ENCODE measurements at regions of chr2 and their contacts with region 1.

Region 1: DNA sequence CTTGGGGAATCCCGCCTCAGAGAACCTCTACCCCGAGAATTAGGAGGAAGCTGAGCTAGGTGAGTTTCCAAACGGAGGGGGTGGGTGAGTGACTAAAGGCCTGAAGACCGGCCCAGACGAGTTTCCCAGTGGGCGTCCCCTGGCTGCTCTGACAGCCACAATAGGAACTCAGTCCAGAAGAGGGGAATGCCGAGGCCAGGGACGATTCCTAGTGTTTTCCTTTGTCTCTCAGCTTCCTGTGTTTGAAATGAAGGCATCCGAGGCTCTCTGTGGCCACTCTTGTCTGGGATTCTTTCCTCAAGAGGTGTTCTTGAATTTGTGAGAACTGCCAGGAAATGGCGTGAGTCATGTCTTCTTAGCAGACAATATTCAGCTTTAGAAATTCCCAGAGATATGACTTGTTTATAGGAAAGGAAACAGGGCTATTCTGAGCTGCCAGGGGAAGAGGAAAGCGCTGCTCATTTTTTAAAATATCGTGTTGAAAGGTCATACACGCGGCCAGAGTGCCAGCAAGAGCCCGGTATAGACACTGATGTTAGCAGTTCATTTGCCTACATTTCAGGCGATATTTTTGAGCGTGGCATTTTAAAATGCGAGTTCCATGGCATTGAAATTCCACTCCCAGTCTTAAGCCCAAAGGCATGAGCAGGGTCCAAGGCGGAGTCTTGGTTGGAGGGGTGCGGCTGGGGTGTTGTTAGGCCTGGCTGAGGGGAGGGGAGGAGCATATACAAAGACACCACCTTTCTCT is 169.1 kb upstream of the KLF7 start:
- DNase-seq: no peak
- H3K4me3 Mint-ChIP-seq: peak overlapping the region; percentile 28
- H3K27ac Mint-ChIP-seq: peak overlapping the region; percentile 88
- H3K4me1 Mint-ChIP-seq: peaks cover 82% of the 10 kb centered on the region
- H3K27me3 Mint-ChIP-seq: no peaks in the 10 kb centered on the region

Region 2: GRCh38 chr2:206890926-206891325 is 443.9 kb before region 1 on chr2:
- intact Hi-C with region 1: no loop called
- DNase-seq: no peak
- H3K4me3 Mint-ChIP-seq: no peak overlapping the region
- H3K27ac Mint-ChIP-seq: no peak overlapping the region
- H3K4me1 Mint-ChIP-seq: no peaks in the 10 kb centered on the region
- H3K27me3 Mint-ChIP-seq: no peaks in the 10 kb centered on the region

Region 3: GRCh38 chr2:207046724-207047123 is 288.1 kb before region 1 on chr2:
- intact Hi-C with region 1: loop called (anchors 5 kb)
- DNase-seq: peak; percentile 6
- H3K4me3 Mint-ChIP-seq: no peak overlapping the region
- H3K27ac Mint-ChIP-seq: no peak overlapping the region
- H3K4me1 Mint-ChIP-seq: peaks cover 15% of the 10 kb centered on the region
- H3K27me3 Mint-ChIP-seq: peaks cover 2% of the 10 kb centered on the region

Region 4: GRCh38 chr2:207156451-207157161 is 178.2 kb before region 1 on chr2:
- intact Hi-C with region 1: loop called (anchors 2 kb)
- DNase-seq: peak; percentile 19
- H3K4me3 Mint-ChIP-seq: peak overlapping the region; percentile 0
- H3K27ac Mint-ChIP-seq: peak overlapping the region; percentile 41
- H3K4me1 Mint-ChIP-seq: peaks cover 75% of the 10 kb centered on the region
- H3K27me3 Mint-ChIP-seq: peaks cover 3% of the 10 kb centered on the region

Region 5: DNA sequence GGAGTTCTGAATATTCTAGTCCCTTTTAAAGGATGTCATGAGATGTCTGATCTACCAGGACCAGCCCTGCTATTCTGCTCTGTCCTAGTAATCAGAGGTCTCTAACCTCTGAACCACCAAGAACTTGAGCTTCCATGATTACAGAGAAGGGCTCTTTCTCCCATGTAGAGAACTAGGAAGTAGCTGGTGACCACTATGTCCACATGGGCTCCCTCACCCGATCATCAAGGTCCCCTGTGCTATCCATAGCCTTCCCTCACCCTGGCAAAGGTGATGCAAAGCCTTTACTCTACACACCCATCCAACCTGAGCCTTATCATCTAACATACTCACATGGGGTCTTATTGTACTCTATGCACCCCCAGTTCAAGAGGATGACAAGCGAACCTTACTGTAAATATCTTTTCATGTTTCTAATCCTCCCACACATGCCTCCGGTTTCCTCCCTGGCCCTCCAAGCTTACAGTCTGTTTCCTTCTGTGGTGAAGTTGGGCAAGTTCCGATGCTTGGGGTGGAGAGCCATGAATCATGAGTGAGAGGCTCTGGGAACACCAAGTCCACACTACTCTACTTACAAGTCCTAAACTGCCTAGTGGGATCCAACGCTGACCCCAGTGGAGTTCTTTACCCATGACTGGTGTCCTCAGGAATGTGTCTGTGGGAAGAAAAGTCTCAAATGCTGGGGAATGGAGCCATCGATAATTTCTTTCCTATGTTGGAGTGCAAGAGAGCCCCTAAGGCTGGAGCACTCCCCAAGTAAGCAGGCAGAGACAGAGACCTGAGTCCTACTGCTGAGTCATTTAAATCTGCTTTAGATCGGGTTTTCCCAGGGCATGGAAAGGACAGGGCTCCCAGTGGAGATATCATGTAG is 95.7 kb before region 1 on chr2:
- intact Hi-C with region 1: loop called (anchors 1 kb)
- DNase-seq: no peak
- H3K4me3 Mint-ChIP-seq: peak overlapping the region; percentile 50
- H3K27ac Mint-ChIP-seq: peak overlapping the region; percentile 73
- H3K4me1 Mint-ChIP-seq: peaks cover 19% of the 10 kb centered on the region
- H3K27me3 Mint-ChIP-seq: no peaks in the 10 kb centered on the region

Region 6: GRCh38 chr2:207288628-207289027 is 46.2 kb before region 1 on chr2:
- intact Hi-C with region 1: loop called (anchors 1 kb)
- DNase-seq: no peak
- H3K4me3 Mint-ChIP-seq: no peak overlapping the region
- H3K27ac Mint-ChIP-seq: no peak overlapping the region
- H3K4me1 Mint-ChIP-seq: peaks cover 77% of the 10 kb centered on the region
- H3K27me3 Mint-ChIP-seq: no peaks in the 10 kb centered on the region

Region 7: DNA sequence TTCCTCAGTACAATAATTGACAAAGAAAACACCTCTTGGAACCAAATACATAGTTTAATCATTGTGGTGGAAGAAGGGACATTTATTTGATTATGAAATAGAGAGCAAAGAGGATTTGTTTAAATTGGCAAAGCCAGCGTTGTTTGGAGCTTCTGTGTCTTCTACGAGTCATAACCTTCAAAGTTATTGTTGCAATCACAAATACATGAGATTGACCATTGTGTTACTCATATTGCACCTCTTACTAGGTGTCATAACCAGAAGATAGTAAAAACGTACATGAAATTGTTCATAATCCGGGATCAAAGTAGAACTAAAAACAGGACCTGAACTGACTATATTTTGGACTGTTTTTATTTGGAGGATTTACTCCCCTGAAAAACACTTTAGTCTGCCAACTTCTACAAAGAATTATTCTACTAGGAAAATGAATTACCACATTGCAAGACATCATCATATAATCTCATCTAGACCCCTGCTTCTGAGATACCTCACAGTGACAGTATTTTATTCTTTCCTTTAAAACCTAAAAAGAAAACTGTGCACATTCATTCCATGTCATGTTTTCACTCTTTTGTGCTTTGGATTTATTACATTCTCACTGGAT is 17.3 kb before region 1 on chr2:
- intact Hi-C with region 1: loop called (anchors 1 kb)
- DNase-seq: no peak
- H3K4me3 Mint-ChIP-seq: no peak overlapping the region
- H3K27ac Mint-ChIP-seq: peak overlapping the region; percentile 33
- H3K4me1 Mint-ChIP-seq: peaks cover 50% of the 10 kb centered on the region
- H3K27me3 Mint-ChIP-seq: no peaks in the 10 kb centered on the region

Region 8: GRCh38 chr2:207432453-207432852 is 97.7 kb after region 1 on chr2:
- intact Hi-C with region 1: no loop called
- DNase-seq: no peak
- H3K4me3 Mint-ChIP-seq: no peak overlapping the region
- H3K27ac Mint-ChIP-seq: no peak overlapping the region
- H3K4me1 Mint-ChIP-seq: no peaks in the 10 kb centered on the region
- H3K27me3 Mint-ChIP-seq: no peaks in the 10 kb centered on the region

Measured in activated T-helper 1 cell treated with anti-CD3 and anti-CD28 coated beads, Interleukin-12 subunit alpha, Interleukin-12 subunit beta, Interleukin-2, Interleukin-4 antibody, amounts not matched to agents 30 ng/mL and 10 ng/mL and 1 ng/mL, durations not matched to agents 14 hours and 24 hours and 36 hours (primary cell).